ENCODE measurements at regions of chr17 and their contacts with region 1.

Region 1: GRCh38 chr17:79400989-79401703 is 209.7 kb downstream of the RBFOX3 start:
- DNase-seq: peak; percentile 50 to 62
- ATAC-seq: peak; percentile 67 to 86 (median 76)
- H3K4me3 ChIP-seq: peak overlapping the region in 8 of 10 donors; percentile 1 to 40 (median 30)
- H3K27ac ChIP-seq: no peak overlapping the region
- H3K4me1 ChIP-seq: peaks cover 0 to 9% (median 4%) of the 10 kb centered on the region in 9 donors
- H3K27me3 ChIP-seq: peaks cover 5 to 98% (median 82%) of the 10 kb centered on the region in 7 donors
- CTCF ChIP-seq: peak; percentile 87 to 95 (median 93)

Region 2: GRCh38 chr17:79702034-79702433 is 300.9 kb after region 1 on chr17:
- intact Hi-C with region 1: loop called in 6 of 10 experiments (anchors 5 to 10 kb)
- DNase-seq: no peak
- ATAC-seq: no peak
- H3K4me3 ChIP-seq: no peak overlapping the region
- H3K27ac ChIP-seq: no peak overlapping the region
- H3K4me1 ChIP-seq: no peaks in the 10 kb centered on the region
- H3K27me3 ChIP-seq: peaks cover 0 to 69% (median 52%) of the 10 kb centered on the region in 7 donors
- CTCF ChIP-seq: no peak

Measured in heart right ventricle (tissue), 16 donors.